ENCODE measurements at regions of chr16 and their contacts with region 1.

Region 1: GRCh38 chr16:21277927-21278706 is at the start of gene CRYM:
- DNase-seq: peak; percentile 68
- H3K4me3 Mint-ChIP-seq: peak within 1 kb of the TSS; percentile 25
- H3K27ac Mint-ChIP-seq: no peak within 1 kb of the TSS
- H3K4me1 Mint-ChIP-seq: no peaks in the 10 kb centered on the region
- H3K27me3 Mint-ChIP-seq: peaks cover 54% of the 10 kb centered on the region
- total RNA-seq, gene CRYM: not detected

Region 2: GRCh38 chr16:21190599-21190998 is 87.5 kb before region 1 on chr16:
- CTCF ChIA-PET with region 1: interaction called, 12 read pairs
- POLR2A ChIA-PET with region 1: no interaction called
- intact Hi-C with region 1: loop called (anchors 1 kb)
- DNase-seq: no peak
- H3K4me3 Mint-ChIP-seq: no peak overlapping the region
- H3K27ac Mint-ChIP-seq: no peak overlapping the region
- H3K4me1 Mint-ChIP-seq: peaks cover 22% of the 10 kb centered on the region
- H3K27me3 Mint-ChIP-seq: peaks cover 11% of the 10 kb centered on the region